AG04449 (cell line): ENCODE measurements at regions of chr10 and their contacts with region 1.

Region 1: GRCh38 chr10:511101-511848 is 178.2 kb downstream of the DIP2C start:
- DNase-seq: peak; percentile 68
- H3K4me3 ChIP-seq: no peak overlapping the region
- CTCF ChIP-seq: peak; percentile 99

Region 2: DNA sequence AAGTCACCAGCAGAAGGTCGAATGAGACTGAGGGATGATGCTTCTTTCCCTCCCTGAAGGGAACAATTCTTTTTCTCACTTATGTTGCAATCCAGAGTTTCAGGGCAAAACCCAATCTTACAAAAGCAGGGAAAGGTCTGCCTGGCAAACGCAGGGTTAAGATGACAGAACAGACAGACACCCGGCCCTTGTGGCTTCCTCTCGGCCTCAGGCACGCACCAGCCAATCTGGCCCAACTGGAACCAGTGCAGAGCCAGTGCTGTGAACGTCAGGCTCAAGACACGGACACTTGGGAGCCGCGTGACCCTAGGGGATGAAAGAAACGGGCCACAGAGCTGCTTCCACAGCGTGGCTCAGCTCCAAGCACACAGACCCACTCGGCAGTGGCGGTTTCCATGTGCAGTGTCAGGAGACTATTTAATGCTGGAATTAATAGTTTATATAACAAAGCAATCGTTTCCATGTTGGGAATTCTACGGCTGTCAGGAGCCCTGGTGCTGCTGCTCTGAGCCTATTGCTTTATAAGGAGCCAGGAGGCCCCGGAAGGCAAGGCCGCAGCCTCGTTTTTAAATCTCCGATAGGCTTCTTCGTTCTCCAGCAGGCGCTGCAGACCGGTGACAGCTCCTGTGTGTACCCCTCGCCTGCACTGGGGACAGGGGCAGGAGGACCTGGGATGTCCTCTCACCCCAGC is 20.2 kb before region 1 on chr10:
- CTCF ChIA-PET with region 1: interaction called, 21 read pairs
- POLR2A ChIA-PET with region 1: no interaction called
- DNase-seq: no peak
- H3K4me3 ChIP-seq: peak overlapping the region; percentile 2; the same call in 1 of the 2 replicates
- CTCF ChIP-seq: no peak

Region 3: DNA sequence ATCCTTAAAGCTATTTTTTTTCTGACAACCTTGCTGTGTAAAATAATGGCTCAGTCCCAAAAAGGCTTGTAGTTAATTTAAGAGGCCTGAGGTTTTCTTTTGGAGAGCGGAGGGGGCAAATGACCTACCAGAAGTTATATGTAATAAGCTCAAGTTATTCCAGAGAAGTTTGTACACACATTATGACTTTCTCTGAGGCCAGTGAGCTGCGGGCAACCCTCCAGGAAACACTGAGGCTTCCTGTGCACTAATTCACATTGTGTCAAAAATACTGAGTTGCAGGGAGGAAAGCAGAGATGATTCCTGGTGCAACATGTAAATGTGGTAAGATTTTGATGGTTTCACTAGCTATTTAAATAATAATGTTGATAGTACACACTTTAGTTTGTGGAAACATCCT is 10.4 kb before region 1 on chr10:
- CTCF ChIA-PET with region 1: interaction called, 33 read pairs
- POLR2A ChIA-PET with region 1: no interaction called
- DNase-seq: no peak
- H3K4me3 ChIP-seq: no peak overlapping the region
- CTCF ChIP-seq: no peak

Region 4: GRCh38 chr10:548286-548835 is 37.1 kb after region 1 on chr10:
- CTCF ChIA-PET with region 1: interaction called, 13 read pairs
- POLR2A ChIA-PET with region 1: no interaction called
- DNase-seq: no peak
- H3K4me3 ChIP-seq: no peak overlapping the region
- CTCF ChIP-seq: no peak

Region 5: GRCh38 chr10:561721-562120 is 50.4 kb after region 1 on chr10:
- CTCF ChIA-PET with region 1: no interaction called
- POLR2A ChIA-PET with region 1: no interaction called
- DNase-seq: no peak
- H3K4me3 ChIP-seq: no peak overlapping the region
- CTCF ChIP-seq: no peak

Region 6: DNA sequence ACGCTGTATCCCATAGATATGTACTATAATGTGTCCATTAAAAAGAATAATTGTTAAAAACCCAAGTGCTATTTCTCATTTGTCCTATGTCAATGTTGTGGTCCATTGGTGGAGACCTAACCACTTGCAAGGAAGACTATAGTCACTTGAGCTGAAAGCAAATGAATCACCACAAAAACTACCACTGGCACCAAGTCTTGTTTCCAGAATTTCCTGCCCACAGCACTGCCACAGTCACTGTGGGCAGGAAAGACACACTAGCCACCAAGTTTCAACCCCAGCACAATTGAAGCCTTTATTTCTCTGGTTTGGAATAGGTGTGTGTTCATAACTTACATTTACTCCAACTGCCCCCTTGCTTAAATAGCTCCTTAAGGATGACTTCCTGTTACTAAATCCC is 165.8 kb after region 1 on chr10:
- CTCF ChIA-PET with region 1: interaction called, 10 read pairs
- POLR2A ChIA-PET with region 1: no interaction called
- DNase-seq: no peak
- H3K4me3 ChIP-seq: no peak overlapping the region
- CTCF ChIP-seq: no peak

Region 7: GRCh38 chr10:784403-785088 is 273.3 kb after region 1 on chr10:
- CTCF ChIA-PET with region 1: interaction called, 86 read pairs
- POLR2A ChIA-PET with region 1: no interaction called
- DNase-seq: peak; percentile 33
- H3K4me3 ChIP-seq: peak overlapping the region; percentile 52
- CTCF ChIP-seq: peak; percentile 43

Region 8: DNA sequence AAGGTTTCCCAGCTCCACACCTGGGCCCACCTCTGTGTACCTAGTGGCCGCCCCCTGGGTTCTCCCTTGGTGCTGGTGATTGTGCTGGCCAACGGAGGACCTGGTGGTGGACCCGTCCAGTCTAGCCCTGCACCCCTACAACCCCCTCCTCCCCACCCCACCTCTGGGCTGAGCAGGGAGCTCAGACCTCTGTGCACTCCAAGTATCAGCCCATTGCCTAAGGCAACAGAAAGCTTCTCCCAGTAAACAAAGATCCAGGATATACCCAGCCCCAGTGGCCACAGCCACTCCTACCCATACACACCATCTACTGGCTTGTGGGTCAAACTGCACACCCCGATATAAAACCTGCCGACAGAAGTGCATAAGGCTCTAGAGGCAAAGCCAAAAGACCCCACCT is 283.2 kb after region 1 on chr10:
- CTCF ChIA-PET with region 1: interaction called, 86 read pairs
- POLR2A ChIA-PET with region 1: no interaction called
- DNase-seq: no peak
- H3K4me3 ChIP-seq: no peak overlapping the region
- CTCF ChIP-seq: peak; percentile 40